OCI-LY7 (cell line): ENCODE measurements at regions of chr1 and their contacts with region 1.

Region 1: GRCh38 chr1:116485071-116485735 is 85.6 kb downstream of the CD58 start:
- DNase-seq: peak; percentile 88
- H3K4me3 ChIP-seq: no peak overlapping the region
- H3K27ac ChIP-seq: no peak overlapping the region
- H3K4me1 ChIP-seq: no peaks in the 10 kb centered on the region
- CTCF ChIP-seq: peak; percentile 95

Region 2: GRCh38 chr1:116232989-116233514 is 252.2 kb before region 1 on chr1:
- CTCF ChIA-PET with region 1: interaction called, 5 read pairs
- POLR2A ChIA-PET with region 1: interaction called, 4 read pairs
- intact Hi-C with region 1: loop called (anchors 5 kb)
- DNase-seq: peak; percentile 76
- H3K4me3 ChIP-seq: no peak overlapping the region
- H3K27ac ChIP-seq: peak overlapping the region; percentile 26
- H3K4me1 ChIP-seq: peaks cover 54% of the 10 kb centered on the region
- CTCF ChIP-seq: peak; percentile 75

Region 3: DNA sequence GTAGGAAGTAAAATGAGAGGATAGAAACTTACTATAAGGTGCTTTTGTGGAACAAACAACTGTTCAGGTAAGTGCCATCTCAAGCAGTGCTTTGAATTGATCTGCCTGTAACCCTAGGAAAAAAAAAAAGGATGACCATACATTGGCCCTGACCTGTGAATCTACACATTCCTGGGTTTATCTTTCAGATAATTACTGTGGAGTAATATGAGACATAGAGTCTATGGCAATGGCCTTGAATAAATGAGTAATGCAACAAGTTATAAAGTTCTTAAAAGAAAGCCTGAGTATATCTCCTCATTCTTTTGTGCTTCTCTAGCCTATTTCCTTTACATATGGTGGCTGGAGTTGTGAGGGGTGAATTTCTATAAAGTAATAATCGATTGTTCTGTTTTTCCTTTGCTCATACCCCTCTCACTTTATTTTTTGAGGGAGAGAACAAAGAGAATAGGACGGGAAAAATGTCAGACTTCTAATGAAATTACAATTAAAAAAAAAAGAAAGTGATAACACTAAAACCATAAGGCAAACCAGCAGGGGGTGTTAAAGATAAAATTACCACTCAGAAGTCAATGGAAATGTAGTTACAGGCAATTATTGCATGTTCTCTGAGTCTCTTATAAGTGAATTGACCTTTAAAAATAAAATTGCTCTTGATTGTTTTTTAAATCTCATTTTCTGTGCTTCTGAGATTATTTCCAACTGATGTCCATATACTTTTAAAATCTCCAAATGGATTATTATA is 124.6 kb before region 1 on chr1:
- CTCF ChIA-PET with region 1: no interaction called
- POLR2A ChIA-PET with region 1: interaction called, 3 read pairs
- intact Hi-C with region 1: loop called (anchors 5 kb)
- DNase-seq: peak; percentile 36
- H3K4me3 ChIP-seq: no peak overlapping the region
- H3K27ac ChIP-seq: no peak overlapping the region
- H3K4me1 ChIP-seq: peaks cover 8% of the 10 kb centered on the region
- CTCF ChIP-seq: peak; percentile 69

Region 4: DNA sequence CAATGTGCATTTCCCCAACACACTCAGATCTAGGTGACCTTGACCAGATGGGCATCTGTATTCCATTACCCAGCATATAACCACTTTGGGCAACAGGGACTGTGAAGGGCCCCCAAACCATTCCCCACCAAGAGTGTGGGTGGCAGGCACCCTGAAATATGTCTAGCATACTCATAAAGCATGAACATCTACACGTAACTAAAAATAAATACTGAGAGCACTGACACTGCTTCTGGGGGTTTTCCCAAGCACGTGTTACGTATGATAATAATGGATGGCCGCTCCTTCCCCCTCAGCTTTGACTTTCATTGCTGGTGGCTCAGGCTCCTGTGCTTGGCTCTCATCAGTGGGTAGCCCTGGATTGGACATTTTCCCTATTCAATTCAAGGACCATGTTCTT is 143.2 kb after region 1 on chr1:
- CTCF ChIA-PET with region 1: no interaction called
- POLR2A ChIA-PET with region 1: no interaction called
- intact Hi-C with region 1: no loop called
- DNase-seq: no peak
- H3K4me3 ChIP-seq: no peak overlapping the region
- H3K27ac ChIP-seq: no peak overlapping the region
- H3K4me1 ChIP-seq: no peaks in the 10 kb centered on the region
- CTCF ChIP-seq: no peak